ENCODE measurements at regions of chr1 and their contacts with region 1.

Region 1: DNA sequence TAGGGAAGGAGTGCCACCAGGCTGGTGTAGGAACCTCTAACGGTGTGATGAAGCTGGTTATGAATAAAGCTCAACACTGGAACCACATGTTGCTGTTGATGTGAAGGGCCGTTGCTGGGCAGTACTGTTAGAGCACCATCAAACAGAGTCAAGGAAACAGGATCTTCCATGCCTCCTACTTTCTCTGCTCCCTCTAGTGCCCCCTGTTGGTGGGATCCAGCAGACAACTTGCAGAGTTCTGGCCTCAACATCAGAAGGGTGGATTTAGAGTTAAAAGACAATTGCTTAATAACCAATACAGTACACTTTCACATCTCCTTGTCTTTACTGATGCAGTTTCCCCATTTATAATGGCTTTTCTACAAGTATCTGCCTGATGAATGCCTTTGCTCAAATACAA is 336.4 kb downstream of the NTNG1 start:
- DNase-seq: no peak
- CTCF ChIP-seq: peak; percentile 33

Region 2: DNA sequence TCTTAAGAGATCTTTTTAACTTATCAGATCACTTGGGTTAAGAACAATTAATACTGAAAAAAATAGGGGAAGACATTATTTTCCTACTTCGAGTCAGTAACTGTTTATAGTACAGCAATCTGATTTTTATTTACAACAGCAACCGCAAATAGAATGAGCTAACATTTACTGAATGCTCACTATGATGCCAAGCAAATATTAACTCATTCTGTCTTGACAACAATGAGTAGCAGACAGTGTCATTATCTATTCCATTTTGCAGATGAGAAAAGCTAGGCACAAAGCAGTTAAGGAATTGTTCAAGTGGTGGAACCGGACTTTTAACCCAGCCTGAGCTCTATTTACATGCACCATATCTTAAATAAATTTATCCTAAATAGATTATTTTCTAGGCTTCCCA is 62.7 kb before region 1 on chr1:
- CTCF ChIA-PET with region 1: no interaction called
- POLR2A ChIA-PET with region 1: no interaction called
- DNase-seq: no peak
- CTCF ChIP-seq: no peak

Region 3: DNA sequence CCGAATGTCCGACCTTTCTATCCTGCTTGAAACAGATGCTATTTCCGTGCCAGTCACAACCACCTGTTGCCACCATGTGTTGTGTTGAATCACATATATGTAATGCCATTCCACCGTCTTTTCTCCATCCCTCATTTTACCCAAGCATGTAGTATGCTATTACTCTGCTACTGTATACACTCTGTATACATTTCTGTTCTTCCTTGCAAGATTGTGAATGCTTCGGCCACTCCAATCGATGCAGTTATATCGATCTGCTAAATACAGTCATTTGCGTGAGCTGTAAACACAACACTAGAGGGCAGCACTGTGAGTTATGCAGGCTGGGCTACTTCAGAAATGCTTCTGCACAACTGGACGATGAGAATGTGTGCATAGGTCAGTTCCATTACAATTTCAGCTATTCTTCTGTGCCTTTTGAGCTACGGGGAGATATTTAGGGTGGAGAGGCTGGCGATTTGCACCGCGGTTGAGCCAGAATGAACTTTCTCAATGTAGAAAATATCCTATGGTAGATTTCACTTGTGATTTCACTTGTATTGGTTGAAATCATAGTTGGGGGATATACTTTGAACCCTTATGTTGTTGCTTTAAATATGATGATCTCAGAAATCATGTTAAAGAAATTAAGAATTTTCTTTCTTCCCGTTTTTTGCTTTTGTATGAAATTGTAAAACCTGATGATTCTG is 46.5 kb before region 1 on chr1:
- CTCF ChIA-PET with region 1: interaction called, 22 read pairs
- POLR2A ChIA-PET with region 1: no interaction called
- DNase-seq: peak; percentile 25
- CTCF ChIP-seq: peak; percentile 52

Region 4: GRCh38 chr1:107451715-107452114 is 25.5 kb before region 1 on chr1:
- CTCF ChIA-PET with region 1: interaction called, 19 read pairs
- POLR2A ChIA-PET with region 1: no interaction called
- DNase-seq: no peak
- CTCF ChIP-seq: no peak

Region 5: DNA sequence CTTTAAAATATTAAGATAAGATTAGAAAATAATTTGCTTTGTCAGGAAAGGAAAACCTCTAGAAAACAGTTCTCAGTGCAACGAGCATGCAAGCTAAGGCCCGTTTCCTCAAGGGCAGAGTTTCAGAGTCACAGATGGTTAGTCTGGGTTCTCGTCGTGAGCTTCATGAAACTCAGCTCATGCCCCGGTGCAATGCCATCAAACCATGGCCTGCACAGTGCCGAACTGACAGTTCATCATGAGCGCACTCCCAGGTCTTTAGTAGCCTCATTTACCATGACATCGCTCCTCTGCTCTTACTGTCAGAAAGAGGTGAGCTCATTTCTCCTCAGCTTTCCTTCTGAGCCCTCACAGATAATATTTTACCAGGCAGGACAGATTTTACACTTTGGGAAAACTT is 17.2 kb before region 1 on chr1:
- CTCF ChIA-PET with region 1: interaction called, 28 read pairs
- POLR2A ChIA-PET with region 1: no interaction called
- DNase-seq: no peak
- CTCF ChIP-seq: no peak

Region 6: DNA sequence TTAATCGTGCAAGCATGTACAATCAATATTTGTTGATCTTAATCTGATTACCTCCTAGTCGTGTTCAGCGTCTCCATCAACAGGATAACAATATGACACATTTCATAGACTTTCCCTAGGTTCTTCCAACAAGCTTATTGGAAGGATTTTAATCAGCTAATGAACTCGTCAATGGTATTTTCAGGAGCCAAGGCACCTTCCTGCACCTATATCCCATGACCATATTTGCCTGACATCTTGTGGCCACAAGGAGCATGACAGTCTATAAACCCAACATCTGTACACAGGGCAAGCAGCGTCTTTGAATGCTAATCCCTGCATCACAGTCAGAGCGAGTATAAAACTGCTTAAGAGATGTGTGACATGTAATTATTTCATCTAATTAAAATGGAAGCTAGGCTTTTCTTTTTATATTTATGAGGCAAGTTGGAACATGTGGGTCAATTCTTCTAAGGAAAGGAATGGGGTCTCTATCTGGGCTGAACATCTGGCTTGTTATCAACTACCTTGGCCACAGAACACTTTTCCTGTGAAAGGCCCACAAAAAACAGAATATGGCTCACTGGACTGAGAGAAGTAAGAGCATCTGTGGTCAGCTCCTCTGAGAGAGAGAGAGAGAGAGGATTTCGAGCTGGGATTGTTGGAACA is 52.4 kb after region 1 on chr1:
- CTCF ChIA-PET with region 1: interaction called, 15 read pairs
- POLR2A ChIA-PET with region 1: no interaction called
- DNase-seq: peak; percentile 70
- CTCF ChIP-seq: peak; percentile 85